ENCODE measurements at regions of chr6 and their contacts with region 1.

Region 1: GRCh38 chr6:43769526-43770416 is at the start of gene VEGFA:
- DNase-seq: peak; percentile 84 to 85
- ATAC-seq: peak; percentile 55 to 76
- H3K4me3 ChIP-seq: peak within 1 kb of the TSS; percentile 59
- H3K27ac ChIP-seq: peak within 1 kb of the TSS; percentile 97 to 100
- H3K4me1 ChIP-seq: peaks cover 14% of the 10 kb centered on the region
- CTCF ChIP-seq: peak; percentile 87
- EP300 ChIP-seq: no peak
- POLR2A ChIP-seq: peak; percentile 92
- RAD21 ChIP-seq: peak; percentile 92
- polyA plus RNA-seq, gene VEGFA: 83.7 and 101 TPM in 2 replicates

Region 2: DNA sequence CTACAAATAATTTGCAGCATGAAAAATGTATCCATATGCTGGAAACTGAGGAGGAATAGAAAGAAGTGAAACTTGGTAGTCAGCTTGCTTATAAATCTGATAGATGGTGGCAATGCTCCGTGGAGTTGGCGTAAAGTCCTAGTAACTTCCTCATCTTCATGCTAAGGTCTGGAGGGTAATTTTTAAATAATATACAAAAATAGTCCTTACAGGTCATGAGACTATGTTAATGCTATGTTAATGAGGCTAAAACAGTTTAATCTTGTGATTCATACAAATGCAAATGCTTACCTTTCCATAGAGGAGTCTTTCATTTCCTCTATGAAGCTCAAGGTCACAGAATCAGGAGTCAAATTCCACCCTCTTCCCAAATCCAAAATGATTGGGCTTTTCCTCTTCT is 451.8 kb before region 1 on chr6:
- CTCF ChIA-PET with region 1: no interaction called
- POLR2A ChIA-PET with region 1: no interaction called
- DNase-seq: no peak
- ATAC-seq: no peak
- H3K4me3 ChIP-seq: no peak overlapping the region
- H3K27ac ChIP-seq: no peak overlapping the region
- H3K4me1 ChIP-seq: no peaks in the 10 kb centered on the region
- CTCF ChIP-seq: no peak
- EP300 ChIP-seq: no peak
- POLR2A ChIP-seq: no peak
- RAD21 ChIP-seq: no peak

Region 3: DNA sequence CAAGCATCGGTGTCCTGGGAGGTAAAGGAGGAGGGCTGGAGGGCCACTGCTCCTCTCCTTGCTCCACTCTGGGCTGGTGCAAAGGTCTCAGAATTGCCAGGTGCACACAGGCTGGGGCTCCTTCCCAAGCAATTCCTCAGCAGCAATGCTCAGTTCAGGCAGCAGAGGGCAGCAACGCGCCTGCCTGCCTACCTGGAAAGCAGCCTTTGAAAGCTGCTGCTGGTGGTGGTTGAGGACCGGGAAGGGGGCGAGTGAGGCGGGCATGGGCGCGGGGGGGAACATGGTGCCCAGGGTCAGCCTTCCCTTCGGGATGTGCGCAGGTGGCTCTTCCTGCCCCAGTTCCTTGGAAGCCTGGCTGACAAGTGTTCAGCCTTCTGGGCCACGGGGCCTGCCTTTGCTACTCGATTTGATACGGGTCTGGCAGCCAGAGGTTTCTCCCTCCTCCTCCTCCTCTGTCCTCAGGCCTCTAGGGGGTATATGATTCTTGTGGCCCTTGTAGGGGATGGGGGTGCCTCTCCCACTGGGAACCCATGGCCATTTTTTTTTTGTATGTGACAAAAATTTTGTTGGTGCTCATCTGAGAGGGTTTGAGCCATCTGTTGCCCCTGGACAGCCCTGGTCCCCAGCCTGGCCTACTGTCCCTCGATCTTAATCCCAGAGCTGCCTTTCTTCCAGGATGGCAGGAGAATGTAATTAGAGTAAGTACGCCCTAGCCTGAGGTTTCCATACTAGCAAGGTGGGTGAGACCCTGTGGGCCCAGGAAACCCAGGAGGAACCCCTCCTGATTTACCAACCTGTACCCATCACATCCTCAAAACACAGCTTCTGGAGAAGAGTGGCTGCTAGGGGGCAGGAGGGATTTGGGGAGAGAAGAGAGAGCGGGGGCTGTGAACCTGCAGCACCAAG is 102.3 kb before region 1 on chr6:
- CTCF ChIA-PET with region 1: interaction called, 72 read pairs
- POLR2A ChIA-PET with region 1: interaction called, 4 read pairs
- DNase-seq: peak; percentile 54 to 68
- ATAC-seq: peak; percentile 71 to 81
- H3K4me3 ChIP-seq: no peak overlapping the region
- H3K27ac ChIP-seq: peak overlapping the region; percentile 28 to 66; a peak in 2 of 6 replicates
- H3K4me1 ChIP-seq: peaks cover 14% of the 10 kb centered on the region; the same call in 2 of the 3 replicates
- CTCF ChIP-seq: peak; percentile 77
- EP300 ChIP-seq: no peak
- POLR2A ChIP-seq: no peak
- RAD21 ChIP-seq: peak; percentile 87 to 88

Region 4: GRCh38 chr6:43790025-43790523 is 20.3 kb after region 1 on chr6:
- CTCF ChIA-PET with region 1: interaction called, 26 read pairs
- POLR2A ChIA-PET with region 1: no interaction called
- DNase-seq: no peak
- ATAC-seq: peak; percentile 20 to 45; a peak in 3 of 6 replicates
- H3K4me3 ChIP-seq: no peak overlapping the region
- H3K27ac ChIP-seq: peak overlapping the region in 1 of 2 experiments; percentile 33; a peak in 1 of 6 replicates
- H3K4me1 ChIP-seq: no peaks in the 10 kb centered on the region
- CTCF ChIP-seq: no peak
- EP300 ChIP-seq: no peak
- POLR2A ChIP-seq: no peak
- RAD21 ChIP-seq: no peak

Region 5: DNA sequence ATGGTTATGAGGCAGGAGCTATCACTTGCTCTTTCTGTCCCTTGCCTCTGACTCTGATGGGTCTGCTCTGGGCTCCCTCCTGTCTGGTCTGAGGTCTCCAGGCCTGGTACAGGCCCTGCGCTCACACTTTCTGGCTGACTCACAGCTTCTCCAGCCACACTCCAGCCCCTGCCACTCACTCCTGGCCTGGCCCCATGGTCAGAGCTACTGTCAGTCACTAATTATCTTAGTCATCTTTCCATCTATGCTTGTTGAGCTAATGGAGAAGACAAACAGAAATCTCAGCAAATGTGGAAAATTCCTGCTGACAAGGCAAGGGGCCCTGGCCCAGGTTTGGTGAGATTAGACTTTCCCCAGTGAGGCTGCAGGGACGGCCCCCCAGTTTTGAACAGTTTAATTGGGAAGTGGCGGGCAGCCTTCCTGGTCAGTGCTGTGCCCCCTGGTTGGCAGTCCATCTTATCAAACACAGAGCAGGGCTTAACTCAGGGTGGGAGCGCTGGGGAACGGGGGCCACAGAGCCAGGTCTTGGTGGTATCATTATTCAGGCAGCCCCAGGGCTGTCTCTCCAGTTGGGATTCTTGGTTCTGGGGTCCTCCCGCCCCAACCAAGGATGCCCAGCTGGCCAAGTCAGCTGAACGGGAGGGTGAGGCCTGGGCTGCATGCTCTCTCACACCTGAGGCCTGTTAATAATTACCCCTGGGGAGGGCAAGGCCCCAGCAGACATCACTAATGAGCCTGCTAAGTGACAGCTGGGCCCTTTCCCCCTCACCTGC is 63.6 kb after region 1 on chr6:
- CTCF ChIA-PET with region 1: interaction called, 16 read pairs
- POLR2A ChIA-PET with region 1: no interaction called
- DNase-seq: no peak
- ATAC-seq: peak; percentile 47 to 67; a peak in 3 of 6 replicates
- H3K4me3 ChIP-seq: no peak overlapping the region
- H3K27ac ChIP-seq: peak overlapping the region in 1 of 2 experiments; percentile 33; a peak in 1 of 6 replicates
- H3K4me1 ChIP-seq: peaks cover 16% of the 10 kb centered on the region
- CTCF ChIP-seq: no peak
- EP300 ChIP-seq: no peak
- POLR2A ChIP-seq: no peak
- RAD21 ChIP-seq: no peak

Region 6: DNA sequence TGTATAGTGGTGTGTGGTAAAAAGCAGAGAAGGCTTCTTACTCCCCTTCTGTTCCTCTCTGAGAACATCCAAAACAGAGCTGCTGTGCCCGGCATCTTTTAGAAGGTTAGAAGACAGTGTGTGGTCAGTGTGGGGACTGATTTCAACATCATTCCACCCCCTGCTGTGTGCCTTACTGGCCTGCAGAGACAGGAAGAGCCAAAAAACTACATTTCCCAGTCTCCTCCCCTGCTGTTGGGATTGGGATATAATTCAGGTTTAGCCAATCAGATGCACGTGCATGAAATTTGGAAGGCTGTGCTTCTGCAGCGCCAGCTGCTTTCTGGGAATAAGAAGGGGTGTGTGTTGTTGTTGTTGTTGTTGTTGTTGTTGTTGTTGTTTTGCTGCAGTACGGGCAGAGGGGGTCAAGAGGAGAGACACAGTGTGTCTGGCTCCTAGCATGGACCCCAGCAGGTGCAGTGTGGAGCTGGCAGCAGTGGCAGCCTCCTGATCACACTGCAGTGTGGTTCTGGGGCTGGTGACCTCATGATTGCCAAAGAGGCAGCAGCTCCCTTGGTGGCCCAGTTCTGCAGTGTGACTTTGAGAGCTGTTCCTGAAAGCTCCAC is 282.8 kb after region 1 on chr6:
- CTCF ChIA-PET with region 1: interaction called, 13 read pairs
- POLR2A ChIA-PET with region 1: interaction called, 8 read pairs
- DNase-seq: peak in 1 of 2 experiments; percentile 56
- ATAC-seq: peak; percentile 48 to 63; a peak in 5 of 6 replicates
- H3K4me3 ChIP-seq: no peak overlapping the region
- H3K27ac ChIP-seq: peak overlapping the region; percentile 89 to 97
- H3K4me1 ChIP-seq: peaks cover 98% of the 10 kb centered on the region
- CTCF ChIP-seq: no peak
- EP300 ChIP-seq: no peak
- POLR2A ChIP-seq: no peak
- RAD21 ChIP-seq: no peak

Region 7: DNA sequence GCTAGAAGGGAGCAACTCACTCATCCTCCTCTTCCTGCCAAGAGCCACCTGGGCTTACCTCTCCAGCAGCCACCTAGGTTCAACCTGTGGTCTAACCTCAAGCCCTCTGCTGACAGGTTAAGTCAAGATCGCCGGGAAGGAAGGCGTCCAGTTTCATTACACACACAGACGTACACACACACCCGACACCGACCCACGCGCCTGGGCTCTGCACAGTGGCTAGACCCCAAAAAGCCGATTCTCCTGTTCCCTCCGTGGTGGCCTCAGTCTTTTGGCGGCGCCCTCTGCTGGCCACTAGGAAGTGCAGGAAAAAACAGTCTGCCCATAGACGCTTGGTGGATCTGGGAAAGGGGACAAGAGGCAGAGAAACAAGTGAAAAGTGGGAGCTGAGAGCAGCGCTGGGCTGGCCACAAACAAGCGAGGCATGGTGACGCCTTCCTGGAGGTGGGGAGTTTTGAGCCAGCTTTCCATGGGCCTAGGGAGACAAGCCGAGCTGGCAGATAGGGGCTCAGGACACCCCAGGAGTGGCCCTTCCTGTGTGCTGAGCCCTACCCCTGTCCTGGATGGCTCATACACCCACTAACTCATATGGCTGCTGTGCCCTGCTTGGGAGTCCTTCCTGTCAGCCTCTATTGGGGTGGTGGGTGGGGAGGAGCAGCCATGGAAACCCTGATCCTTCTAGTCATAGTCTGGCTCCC is 304.8 kb after region 1 on chr6:
- CTCF ChIA-PET with region 1: interaction called, 235 read pairs
- POLR2A ChIA-PET with region 1: interaction called, 21 read pairs
- DNase-seq: peak; percentile 67 to 73
- ATAC-seq: peak; percentile 61 to 86
- H3K4me3 ChIP-seq: no peak overlapping the region
- H3K27ac ChIP-seq: peak overlapping the region; percentile 87 to 97
- H3K4me1 ChIP-seq: peaks cover 37% of the 10 kb centered on the region
- CTCF ChIP-seq: peak; percentile 82
- EP300 ChIP-seq: no peak
- POLR2A ChIP-seq: no peak
- RAD21 ChIP-seq: peak; percentile 84 to 85

Measured in A549 (cell line).